Esophagus muscularis mucosa (tissue), 4 donors: ENCODE measurements at regions of chr3 and their contacts with region 1.

Region 1: DNA sequence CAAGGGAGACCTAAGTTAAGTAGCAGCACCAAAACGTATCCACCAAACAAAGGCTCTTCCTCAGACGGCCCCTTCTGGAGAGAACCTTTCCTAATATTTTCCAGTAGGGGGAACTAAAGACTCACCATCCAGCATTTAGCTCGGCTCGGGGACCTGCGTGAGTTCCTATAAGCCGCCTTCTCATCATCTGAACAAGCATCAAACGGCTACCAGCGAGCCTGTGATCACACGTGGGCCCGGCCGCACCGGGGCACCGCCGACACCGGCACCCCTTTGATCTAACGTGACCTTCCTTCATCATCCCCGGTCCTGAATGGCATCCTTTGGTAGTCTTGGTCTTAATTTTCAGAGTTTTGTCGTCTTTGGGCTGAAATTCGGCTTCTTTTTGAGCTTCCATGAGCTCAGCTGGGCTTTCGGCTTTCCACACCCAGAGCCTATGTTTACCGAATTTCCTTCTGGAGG is 1.4 kb upstream of the ROBO2 start:
- DNase-seq: no peak
- H3K4me3 ChIP-seq: peak overlapping the region; percentile 50 to 61 (median 54)
- H3K27ac ChIP-seq: no peak overlapping the region
- H3K4me1 ChIP-seq: peaks cover 17 to 22% (median 21%) of the 10 kb centered on the region in 4 donors
- H3K27me3 ChIP-seq: peaks cover 4 to 58% (median 13%) of the 10 kb centered on the region in 4 donors
- CTCF ChIP-seq: peak; percentile 51 to 71 (median 56)
- EP300 ChIP-seq: no peak
- POLR2A ChIP-seq: no peak

Region 2: DNA sequence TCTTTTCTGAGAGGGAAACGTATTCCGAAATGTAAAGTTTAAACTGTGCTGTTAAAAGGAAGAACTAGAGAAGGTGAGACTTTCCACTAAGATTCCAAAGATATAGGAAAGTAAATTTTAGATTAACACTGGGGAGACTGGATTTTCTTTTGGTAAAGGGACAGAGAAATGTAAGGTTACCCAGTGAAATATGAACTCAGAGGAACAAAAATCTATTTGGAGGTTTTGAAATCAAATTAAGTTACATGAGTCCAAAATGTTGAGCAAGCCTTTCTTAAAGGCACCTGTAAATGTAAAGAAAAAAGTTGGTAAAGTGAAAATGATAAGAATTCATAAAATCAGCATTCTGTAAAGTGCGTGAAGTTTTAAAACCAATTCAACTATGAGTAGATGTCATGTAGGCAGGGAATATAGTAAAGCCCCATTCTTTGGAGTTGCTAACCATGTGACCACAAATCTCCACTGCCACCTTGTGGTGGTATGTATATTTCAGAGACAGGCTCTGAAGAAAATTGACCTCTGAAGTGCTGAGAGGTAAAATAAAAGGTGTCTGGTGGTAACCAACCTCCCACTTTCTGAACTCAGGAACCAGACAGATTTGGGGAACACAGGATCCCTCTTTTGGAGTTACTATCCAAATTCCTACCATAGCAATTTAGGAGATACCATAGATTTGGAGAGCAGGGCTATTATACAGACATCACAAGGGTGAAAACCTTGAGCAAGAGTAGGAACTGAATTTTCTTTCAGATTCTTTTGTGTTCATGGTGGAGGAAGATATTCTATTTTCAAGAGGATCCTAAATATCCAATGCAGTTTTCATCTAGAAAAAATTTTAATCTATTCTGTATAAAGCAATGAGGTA is 216.7 kb after region 1 on chr3:
- intact Hi-C with region 1: loop called (anchors 1 kb)
- DNase-seq: no peak
- H3K4me3 ChIP-seq: no peak overlapping the region
- H3K27ac ChIP-seq: no peak overlapping the region
- H3K4me1 ChIP-seq: no peaks in the 10 kb centered on the region
- H3K27me3 ChIP-seq: no peaks in the 10 kb centered on the region
- CTCF ChIP-seq: peak; percentile 49 to 66 (median 65)
- EP300 ChIP-seq: no peak
- POLR2A ChIP-seq: no peak

Region 3: GRCh38 chr3:77436908-77437307 is 398.4 kb after region 1 on chr3:
- intact Hi-C with region 1: no loop called
- DNase-seq: no peak
- H3K4me3 ChIP-seq: no peak overlapping the region
- H3K27ac ChIP-seq: no peak overlapping the region
- H3K4me1 ChIP-seq: no peaks in the 10 kb centered on the region
- H3K27me3 ChIP-seq: no peaks in the 10 kb centered on the region
- CTCF ChIP-seq: no peak
- EP300 ChIP-seq: no peak
- POLR2A ChIP-seq: no peak

Region 4: DNA sequence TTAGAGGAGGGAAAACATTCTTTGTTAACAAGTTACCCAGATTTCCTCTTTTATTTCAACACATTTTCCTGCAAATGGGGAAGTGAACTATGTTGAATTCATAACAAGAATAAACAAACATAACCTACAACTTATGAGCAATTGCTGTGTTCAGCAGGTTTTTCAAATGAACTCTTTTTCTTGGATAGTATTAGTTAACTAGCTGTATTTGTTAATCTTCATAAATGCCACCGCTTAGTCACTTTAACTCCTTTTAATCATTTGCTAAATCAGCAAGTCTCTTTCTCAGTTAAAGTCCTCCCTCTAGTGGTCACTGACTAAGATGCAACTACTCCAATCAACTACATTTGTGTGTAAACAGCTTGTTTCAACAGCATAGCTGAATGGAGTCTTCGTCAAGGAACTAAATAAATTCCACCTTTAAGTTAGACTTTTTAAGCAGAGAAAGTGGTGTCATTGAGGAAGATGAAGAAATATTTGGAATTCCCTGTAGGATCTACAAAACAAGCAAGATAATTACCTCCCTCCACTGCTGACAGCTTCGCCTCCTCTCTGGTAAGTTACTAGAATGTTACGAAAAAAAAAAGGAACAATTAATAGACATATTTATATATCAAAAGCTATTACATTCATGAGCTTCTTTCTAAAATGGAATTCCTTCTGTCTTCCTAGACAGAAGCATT is 1607.3 kb after region 1 on chr3:
- intact Hi-C with region 1: loop called (anchors 10 kb)
- DNase-seq: no peak
- H3K4me3 ChIP-seq: no peak overlapping the region
- H3K27ac ChIP-seq: no peak overlapping the region
- H3K4me1 ChIP-seq: peaks cover 0 to 4% (median 2%) of the 10 kb centered on the region in 4 donors
- H3K27me3 ChIP-seq: no peaks in the 10 kb centered on the region
- CTCF ChIP-seq: peak; percentile 63 to 88 (median 71)
- EP300 ChIP-seq: no peak
- POLR2A ChIP-seq: no peak